ENCODE measurements at regions of chr12 and their contacts with region 1.

Region 1: DNA sequence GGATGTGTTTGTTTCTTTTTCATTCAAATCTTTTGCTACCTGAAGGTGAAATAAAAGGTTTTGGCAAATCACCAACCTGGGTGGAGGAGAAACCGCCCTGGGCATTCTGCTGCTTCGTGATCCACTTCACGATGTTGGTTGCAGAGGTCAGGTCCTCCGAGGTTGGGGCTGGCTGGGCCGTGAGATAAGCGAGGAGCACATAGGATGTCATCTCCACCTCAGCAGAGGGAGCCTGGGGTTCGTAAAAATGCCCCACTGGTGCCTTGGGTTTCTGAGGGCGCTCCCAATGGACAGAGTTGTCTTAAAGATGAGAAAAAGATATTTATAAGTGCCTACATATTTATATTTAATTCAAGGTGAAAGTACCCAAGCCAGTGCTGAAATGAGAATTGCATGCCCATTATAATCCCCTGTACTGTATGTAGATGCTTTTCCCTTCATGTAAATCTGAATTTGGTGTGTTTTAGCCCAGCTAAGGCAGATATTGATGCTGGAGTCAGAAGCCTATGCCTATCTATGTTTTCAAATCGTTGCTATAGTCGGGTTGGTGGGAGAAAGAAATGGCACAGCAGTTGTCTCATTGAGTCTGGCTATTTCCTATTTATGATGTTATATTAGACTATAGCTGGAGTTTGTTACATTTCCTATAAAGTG is 41.1 kb downstream of the A2M start:
- DNase-seq: no peak
- ATAC-seq: peak in 1 of 8 donors; percentile 39
- H3K4me3 ChIP-seq: no peak overlapping the region
- H3K27ac ChIP-seq: no peak overlapping the region
- H3K4me1 ChIP-seq: peaks cover 0 to 17% (median 0%) of the 10 kb centered on the region in 9 donors
- H3K27me3 ChIP-seq: no peaks in the 10 kb centered on the region
- CTCF ChIP-seq: no peak

Region 2: DNA sequence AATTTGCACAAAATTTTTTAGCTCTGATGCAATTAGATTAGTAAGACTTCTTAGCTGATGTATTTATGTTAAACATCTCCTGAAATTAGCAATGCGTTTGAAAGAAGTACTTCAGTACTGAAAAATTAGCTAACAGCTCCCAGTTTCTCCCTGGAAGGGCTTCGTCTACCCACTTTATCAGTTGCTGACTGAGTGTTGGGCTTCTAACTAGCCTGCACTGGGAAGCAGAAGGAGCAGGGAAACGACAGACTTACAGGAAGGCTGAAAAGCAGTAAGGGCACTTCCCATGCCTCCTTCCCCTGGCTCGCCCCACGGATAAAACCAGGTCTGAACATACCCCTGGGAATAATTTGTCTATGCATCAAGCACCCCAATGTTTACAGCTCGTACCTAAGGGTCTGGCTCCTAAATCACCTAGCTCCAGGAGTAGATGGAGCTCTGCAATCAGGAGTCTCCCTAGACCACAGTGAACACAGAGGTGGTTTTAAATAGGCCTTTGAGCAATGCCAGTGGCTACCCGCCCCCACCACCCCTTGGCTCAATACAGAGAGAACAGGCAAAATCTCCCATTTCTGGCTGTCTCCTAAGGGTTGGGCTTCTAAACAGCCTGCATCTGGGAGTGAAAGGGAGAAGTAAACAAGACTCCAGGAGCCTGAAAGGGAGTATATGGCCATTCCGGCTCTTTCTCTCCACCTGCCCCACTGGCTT is 17.4 kb after region 1 on chr12:
- intact Hi-C with region 1: loop called in 1 of 10 experiments (anchors 2 kb)
- DNase-seq: no peak
- ATAC-seq: peak in 1 of 8 donors; percentile 25
- H3K4me3 ChIP-seq: no peak overlapping the region
- H3K27ac ChIP-seq: peak overlapping the region in 3 of 10 donors; percentile 5 to 65 (median 11)
- H3K4me1 ChIP-seq: peaks cover 0 to 27% (median 9%) of the 10 kb centered on the region in 9 donors
- H3K27me3 ChIP-seq: no peaks in the 10 kb centered on the region
- CTCF ChIP-seq: no peak

Region 3: GRCh38 chr12:9109737-9110491 is 35.3 kb after region 1 on chr12:
- intact Hi-C with region 1: loop called in 2 of 10 experiments (anchors 2 to 5 kb)
- DNase-seq: no peak
- ATAC-seq: no peak
- H3K4me3 ChIP-seq: no peak overlapping the region
- H3K27ac ChIP-seq: peak overlapping the region in 2 of 10 donors; percentile 8 to 18
- H3K4me1 ChIP-seq: peaks cover 0 to 82% (median 29%) of the 10 kb centered on the region in 9 donors
- H3K27me3 ChIP-seq: no peaks in the 10 kb centered on the region
- CTCF ChIP-seq: no peak